ENCODE measurements at regions of chr5 and their contacts with region 1.

Region 1: GRCh38 chr5:124725040-124725434 is 21.4 kb downstream of the ZNF608 start:
- DNase-seq: no peak

Region 2: DNA sequence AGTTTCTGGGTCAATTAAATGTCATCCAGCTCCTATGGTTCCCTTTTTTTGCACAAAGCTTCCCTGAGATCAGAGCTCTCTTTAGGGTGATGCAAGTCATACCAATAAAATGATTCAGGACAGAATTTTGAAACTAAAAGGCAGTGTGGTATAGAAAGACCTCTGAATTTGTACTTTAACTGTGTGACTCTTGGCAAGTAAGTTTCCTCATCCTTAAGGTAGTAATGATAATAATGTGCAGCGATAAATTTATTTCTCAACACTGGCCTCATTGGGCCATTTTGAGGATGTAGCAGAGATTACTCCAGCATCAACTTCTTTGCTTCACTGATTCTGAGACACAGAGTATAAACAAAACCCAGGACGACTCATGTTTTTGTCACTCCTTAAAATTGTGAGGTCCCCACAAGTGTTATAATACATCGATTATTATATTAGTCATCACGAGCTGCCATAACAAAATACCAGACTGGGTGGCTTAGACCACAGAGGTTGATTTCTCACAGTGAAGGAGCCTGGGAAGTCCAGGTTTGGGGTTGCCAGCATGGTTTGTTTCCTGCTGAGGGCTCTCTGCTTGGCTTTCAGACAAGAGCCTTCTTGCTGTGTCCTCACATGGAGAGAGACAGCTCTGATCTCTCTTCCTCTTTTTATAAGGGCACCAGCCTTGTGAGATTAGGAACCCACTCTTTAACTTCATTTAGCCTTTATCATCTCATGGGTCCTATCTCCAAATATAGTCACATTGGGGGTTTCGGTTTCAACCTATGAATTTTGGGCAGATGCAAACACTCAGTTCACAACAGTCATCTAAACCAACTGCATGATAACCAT is 271.6 kb before region 1 on chr5:
- intact Hi-C with region 1: loop called (anchors 10 kb)
- DNase-seq: no peak